ENCODE measurements at regions of chr20 and their contacts with region 1.

Region 1: GRCh38 chr20:34876162-34877001 is at the start of gene ACSS2:
- DNase-seq: peak; percentile 100
- H3K4me3 Mint-ChIP-seq: peak within 1 kb of the TSS; percentile 87
- H3K27ac Mint-ChIP-seq: peak within 1 kb of the TSS; percentile 85
- H3K4me1 Mint-ChIP-seq: peaks cover 59% of the 10 kb centered on the region
- H3K27me3 Mint-ChIP-seq: no peaks in the 10 kb centered on the region
- total RNA-seq, gene ACSS2: 71.3 to 73.6 TPM

Region 2: DNA sequence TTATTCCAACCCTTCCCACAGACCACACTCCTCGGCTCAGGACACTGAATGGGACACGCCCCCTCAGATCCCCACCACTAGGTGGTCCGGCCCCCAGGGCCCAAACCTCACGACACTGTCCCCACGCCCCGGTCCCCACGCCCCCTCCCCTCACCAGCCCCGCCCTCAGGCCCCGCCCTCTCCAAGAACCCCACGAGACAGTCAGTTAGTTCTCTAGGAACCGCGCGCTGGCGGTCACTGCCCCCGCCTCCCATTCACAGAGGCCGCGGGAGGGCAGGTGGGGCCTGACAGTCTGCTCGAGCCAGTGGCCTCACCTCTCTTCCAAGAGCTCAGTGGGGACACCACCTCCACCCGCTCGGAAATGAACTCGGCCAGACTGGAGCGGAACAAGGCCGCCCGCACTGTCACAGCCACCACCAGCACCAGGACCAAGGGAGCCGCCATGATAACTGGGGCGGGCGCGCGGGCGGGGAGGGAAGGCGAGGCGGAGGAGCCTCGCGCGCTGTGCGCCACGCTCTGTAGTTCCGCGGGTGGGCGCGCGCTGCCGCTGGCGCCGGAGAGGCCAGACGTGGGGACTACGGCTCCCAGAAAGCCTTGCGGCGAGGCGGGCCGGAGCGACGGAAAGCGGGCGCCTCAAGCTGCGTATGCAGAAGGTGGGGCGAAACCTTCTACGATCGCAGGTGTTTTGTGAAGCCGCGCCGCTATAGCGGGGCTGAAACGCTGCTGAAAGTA is 199.6 kb before region 1 on chr20 and contains the start of gene PIGU:
- CTCF ChIA-PET with region 1: no interaction called
- intact Hi-C with region 1: loop called (anchors 1 kb)
- DNase-seq: peak; percentile 97
- H3K4me3 Mint-ChIP-seq: peak within 1 kb of the TSS; percentile 97
- H3K27ac Mint-ChIP-seq: peak within 1 kb of the TSS; percentile 90
- H3K4me1 Mint-ChIP-seq: peaks cover 29% of the 10 kb centered on the region
- H3K27me3 Mint-ChIP-seq: no peaks in the 10 kb centered on the region
- total RNA-seq, gene PIGU: 18.8 to 18.9 TPM

Region 3: DNA sequence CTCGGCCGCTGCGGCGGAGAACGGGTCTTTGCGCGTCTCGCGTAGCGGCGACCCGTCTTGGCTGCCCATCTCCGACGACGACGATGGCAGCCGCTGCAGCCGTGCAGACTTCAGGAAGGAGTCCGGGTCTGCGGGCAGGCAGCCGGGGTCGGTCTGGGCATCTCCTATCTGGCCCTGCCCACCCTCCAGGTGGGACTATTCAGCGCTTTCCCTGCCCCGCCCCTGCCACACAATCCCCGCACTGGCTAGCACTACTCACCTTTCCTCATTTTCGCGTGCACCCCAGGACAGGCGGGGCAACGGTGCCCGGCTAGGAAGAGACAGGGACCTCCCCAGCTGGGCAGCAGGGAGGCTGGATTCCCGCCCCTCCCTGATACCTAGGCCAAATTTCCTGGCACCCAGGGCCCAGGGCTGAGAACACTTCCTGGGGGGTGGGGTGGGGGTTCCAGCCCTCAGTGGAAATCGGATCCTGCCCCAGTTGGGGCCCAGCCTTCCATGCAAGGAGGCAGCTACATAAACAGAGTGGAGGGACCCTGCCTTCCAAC is 12.9 kb before region 1 on chr20:
- CTCF ChIA-PET with region 1: interaction called, 10 read pairs
- intact Hi-C with region 1: no loop called
- DNase-seq: no peak
- H3K4me3 Mint-ChIP-seq: no peak overlapping the region
- H3K27ac Mint-ChIP-seq: no peak overlapping the region
- H3K4me1 Mint-ChIP-seq: no peaks in the 10 kb centered on the region
- H3K27me3 Mint-ChIP-seq: no peaks in the 10 kb centered on the region

Region 4: GRCh38 chr20:34955232-34956040 is 79.1 kb after region 1 on chr20 and contains the starts of genes GSS and MYH7B:
- CTCF ChIA-PET with region 1: interaction called, 122 read pairs
- intact Hi-C with region 1: loop called (anchors 1 kb)
- DNase-seq: peak; percentile 99
- H3K4me3 Mint-ChIP-seq: peak within 1 kb of the TSS; percentile 98
- H3K27ac Mint-ChIP-seq: peak within 1 kb of the TSS; percentile 92
- H3K4me1 Mint-ChIP-seq: peaks cover 30% of the 10 kb centered on the region
- H3K27me3 Mint-ChIP-seq: no peaks in the 10 kb centered on the region
- total RNA-seq, gene GSS: 84.3 to 86.0 TPM
- total RNA-seq, gene MYH7B: 0.20 to 0.86 TPM

Region 5: DNA sequence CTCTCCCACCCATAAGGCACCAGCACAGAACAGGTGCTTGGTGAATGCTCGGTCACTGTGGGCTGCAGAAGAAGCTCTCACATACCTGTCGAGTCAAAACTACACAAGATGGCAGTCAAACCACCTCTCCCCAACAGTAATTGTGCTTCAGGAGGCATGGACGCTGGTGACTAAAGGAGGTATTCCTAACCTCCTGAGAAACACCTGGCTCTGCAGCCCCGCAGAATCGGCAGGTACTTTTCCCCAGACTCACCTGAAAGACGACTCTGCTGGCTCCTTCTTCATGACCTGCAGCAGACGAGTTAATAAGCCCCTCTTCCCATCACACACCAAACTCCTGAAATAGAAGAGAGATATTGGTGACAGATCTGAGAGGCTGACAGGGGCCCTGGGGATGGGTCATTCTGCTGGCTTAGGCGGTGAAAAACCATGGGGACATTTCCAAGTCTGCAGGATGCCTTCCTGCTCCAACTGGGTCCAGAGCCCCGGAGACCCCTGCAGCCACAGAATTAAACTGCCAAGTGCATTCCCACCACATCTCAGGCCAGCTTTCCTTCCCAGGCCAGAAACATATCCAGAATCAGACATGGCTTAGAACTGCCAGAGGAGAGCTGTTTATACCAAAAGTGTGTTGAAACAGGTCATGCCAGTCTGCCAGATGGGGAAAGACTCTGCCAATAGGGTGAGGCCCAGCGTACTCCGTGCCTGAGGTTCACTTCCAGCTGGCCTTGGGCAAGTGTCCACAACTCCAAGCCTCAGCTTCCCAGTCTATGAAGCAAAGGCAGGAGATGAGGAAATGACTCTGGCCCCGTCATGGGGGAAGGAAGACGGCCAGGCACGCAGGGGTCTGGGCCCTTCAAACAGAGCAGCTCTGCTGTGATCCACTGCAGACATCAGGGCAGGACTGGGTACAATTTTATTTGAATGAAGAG is 132.3 kb after region 1 on chr20:
- CTCF ChIA-PET with region 1: no interaction called
- intact Hi-C with region 1: no loop called
- DNase-seq: peak; percentile 2
- H3K4me3 Mint-ChIP-seq: no peak overlapping the region
- H3K27ac Mint-ChIP-seq: no peak overlapping the region
- H3K4me1 Mint-ChIP-seq: no peaks in the 10 kb centered on the region
- H3K27me3 Mint-ChIP-seq: no peaks in the 10 kb centered on the region

Region 6: DNA sequence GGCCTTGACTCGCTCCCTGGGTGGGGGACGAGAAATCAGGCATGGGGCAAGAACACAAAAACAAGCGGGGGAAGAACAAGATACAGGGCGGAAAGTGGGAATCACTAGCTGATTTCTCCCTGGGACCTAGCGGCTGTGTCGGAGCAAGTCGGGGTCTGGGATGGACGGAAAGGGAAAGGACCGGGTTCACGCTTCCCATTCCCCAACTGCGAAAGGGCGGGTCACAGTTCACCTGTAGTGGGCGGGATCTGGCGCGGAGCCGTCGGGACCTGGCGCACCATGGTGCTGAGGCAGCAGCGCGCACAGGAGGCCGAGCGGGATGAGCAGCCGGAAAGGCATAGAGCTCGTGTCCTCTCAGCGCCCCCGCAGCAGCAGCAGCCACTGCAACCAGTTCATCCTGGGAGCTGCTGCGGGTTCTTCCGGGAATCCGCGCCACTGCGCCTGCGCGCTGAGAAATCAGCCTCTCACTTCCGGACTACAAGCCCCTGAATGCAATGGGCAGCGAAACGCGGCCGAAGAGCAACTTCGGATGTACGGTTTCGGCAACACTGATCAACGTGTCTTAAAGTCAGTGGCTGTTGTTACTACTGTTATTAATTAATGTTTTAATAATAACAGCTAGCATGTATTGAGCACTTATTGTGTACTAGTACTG is 270.7 kb after region 1 on chr20 and contains the start of gene EDEM2:
- CTCF ChIA-PET with region 1: interaction called, 5 read pairs
- intact Hi-C with region 1: loop called (anchors 1 kb)
- DNase-seq: peak; percentile 95
- H3K4me3 Mint-ChIP-seq: peak within 1 kb of the TSS; percentile 91
- H3K27ac Mint-ChIP-seq: peak within 1 kb of the TSS; percentile 86
- H3K4me1 Mint-ChIP-seq: peaks cover 23% of the 10 kb centered on the region
- H3K27me3 Mint-ChIP-seq: no peaks in the 10 kb centered on the region
- total RNA-seq, gene EDEM2: 15.5 to 15.8 TPM

Region 7: DNA sequence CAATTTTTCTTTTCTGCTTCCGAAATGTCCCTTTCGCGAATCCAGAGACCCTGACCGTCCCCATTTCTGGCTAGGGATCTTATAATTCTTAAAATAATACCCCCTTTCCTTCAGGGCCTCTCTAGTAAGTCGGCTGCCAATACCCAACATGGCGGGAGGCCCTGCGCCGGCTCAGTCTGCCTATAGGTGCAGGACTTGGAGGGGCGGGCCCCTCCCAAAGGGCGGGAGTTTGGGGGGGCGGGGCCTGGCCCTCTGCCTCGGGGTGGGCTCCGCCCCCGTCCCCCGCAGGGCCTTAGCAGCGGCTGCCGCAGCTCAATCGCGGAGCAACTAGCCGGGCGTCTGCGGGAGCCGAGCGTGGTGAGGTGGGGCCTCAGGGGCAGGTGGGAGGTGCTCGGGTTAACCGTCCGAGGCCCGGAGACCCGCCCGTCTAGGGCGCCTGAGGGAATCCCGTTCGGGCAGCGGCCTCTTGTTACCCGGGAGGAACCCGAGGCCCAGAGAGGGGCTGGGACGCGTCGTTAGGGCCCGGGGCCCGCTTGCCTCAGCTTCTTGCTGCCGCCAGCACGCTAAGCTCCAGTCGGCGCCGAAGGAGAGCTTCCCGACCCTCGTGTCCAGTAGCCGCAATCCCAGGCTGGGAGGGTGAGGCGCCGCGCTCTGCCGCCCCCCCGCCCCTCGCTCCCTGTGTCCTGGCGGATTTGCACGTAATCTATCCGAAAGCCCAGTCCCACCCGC is 578.7 kb after region 1 on chr20 and contains the start of gene CEP250:
- CTCF ChIA-PET with region 1: interaction called, 3 read pairs
- intact Hi-C with region 1: loop called (anchors 1 kb)
- DNase-seq: peak; percentile 94
- H3K4me3 Mint-ChIP-seq: peak within 1 kb of the TSS; percentile 89
- H3K27ac Mint-ChIP-seq: peak within 1 kb of the TSS; percentile 99
- H3K4me1 Mint-ChIP-seq: peaks cover 27% of the 10 kb centered on the region
- H3K27me3 Mint-ChIP-seq: no peaks in the 10 kb centered on the region
- total RNA-seq, gene CEP250: 43.4 to 46.9 TPM

Measured in activated naive CD4-positive, alpha-beta T cell treated with anti-CD3 and anti-CD28 coated beads for 36 hours (primary cell).